Adrenal gland (tissue), 19 donors: ENCODE measurements at regions of chr10 and their contacts with region 1.

Region 1: GRCh38 chr10:71812016-71812912 is 38.8 kb downstream of the PSAP start:
- DNase-seq: peak; percentile 50 to 76 (median 71)
- H3K4me3 ChIP-seq: no peak overlapping the region
- H3K27ac ChIP-seq: no peak overlapping the region
- H3K4me1 ChIP-seq: peaks cover 1 to 11% of the 10 kb centered on the region in 2 donors
- H3K27me3 ChIP-seq: no peaks in the 10 kb centered on the region
- CTCF ChIP-seq: peak; percentile 64 to 90 (median 74)
- POLR2A ChIP-seq: no peak

Region 2: GRCh38 chr10:71314028-71314693 is 498.1 kb before region 1 on chr10:
- intact Hi-C with region 1: loop called in 1 of 2 experiments (anchors 5 kb)
- DNase-seq: peak in 5 of 7 donors; percentile 49 to 65 (median 53)
- H3K4me3 ChIP-seq: no peak overlapping the region
- H3K27ac ChIP-seq: peak overlapping the region in 1 of 5 donors; percentile 30
- H3K4me1 ChIP-seq: peaks cover 0 to 20% of the 10 kb centered on the region in 2 donors
- H3K27me3 ChIP-seq: no peaks in the 10 kb centered on the region
- CTCF ChIP-seq: peak; percentile 48 to 94 (median 68)
- POLR2A ChIP-seq: no peak

Region 3: DNA sequence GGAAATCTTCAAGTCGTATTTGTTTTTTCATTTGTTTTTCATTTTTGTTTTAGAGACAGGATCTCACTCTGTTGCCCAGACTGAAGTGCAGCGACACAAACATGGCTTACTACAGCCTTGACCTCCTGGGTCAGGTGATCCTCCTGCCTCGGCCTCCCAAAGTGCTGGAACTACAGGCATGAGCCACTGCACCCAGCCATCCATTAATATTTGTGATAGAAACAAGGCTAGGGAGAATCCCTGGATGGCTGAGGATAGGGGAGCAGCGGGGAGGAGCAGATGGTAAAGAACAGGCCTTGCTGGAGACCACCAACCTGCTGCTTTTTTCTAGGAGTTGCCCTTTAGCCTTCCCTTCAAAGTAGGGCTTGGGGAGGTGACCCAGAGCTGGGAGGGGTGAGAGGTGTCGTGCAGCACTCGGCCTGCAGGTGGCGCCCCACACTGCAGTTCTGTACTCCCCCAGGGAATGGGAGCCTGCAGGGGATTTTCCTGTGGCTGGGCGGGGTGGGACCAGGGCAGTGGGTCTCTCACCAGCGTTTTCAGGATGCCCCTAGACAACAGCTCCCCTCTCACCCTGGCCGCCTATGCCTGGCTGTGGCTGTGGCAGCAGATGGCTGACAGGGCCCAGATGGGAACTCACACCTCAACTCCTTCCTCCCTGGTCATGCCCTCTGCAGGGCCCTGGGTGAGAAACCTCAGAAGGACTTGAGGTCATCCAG is 428.1 kb before region 1 on chr10:
- intact Hi-C with region 1: loop called in 1 of 2 experiments (anchors 10 kb)
- DNase-seq: peak; percentile 49 to 84 (median 73)
- H3K4me3 ChIP-seq: no peak overlapping the region
- H3K27ac ChIP-seq: no peak overlapping the region
- H3K4me1 ChIP-seq: no peaks in the 10 kb centered on the region
- H3K27me3 ChIP-seq: no peaks in the 10 kb centered on the region
- CTCF ChIP-seq: peak; percentile 78 to 94 (median 90)
- POLR2A ChIP-seq: no peak

Region 4: DNA sequence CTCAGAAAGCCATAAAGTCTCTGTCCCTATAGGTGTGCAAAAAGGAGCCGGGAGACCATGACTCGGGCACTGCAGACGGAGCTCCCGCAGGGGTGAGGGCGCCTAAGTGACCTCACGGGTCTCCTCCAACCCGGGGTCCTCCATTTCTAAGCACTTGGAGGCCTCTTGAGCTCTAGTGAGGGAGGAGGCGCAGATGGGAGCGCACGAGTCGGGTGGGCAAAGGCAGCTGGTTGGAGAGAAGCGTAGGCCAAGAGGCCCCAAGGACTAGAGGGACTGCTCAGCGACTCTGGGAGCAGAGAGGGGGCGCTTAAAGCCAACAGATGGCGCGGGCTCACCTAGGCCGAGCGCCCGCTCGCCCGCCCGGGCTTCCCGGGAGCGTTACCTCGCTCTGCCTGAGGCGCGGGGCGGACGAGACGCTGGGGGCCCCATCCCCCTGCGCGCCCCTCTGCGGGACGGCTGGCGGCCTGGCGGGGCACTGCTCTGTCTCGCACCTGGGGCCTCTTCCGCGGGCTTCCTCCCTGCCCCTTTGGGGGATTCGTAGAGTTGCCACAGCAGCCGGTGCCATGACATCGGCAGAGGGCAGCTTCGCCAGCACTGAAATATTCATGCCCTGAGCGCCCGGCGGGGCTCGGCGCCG is 416.1 kb before region 1 on chr10:
- intact Hi-C with region 1: loop called in 1 of 2 experiments (anchors 10 kb)
- DNase-seq: peak in 4 of 7 donors; percentile 26 to 66 (median 38)
- H3K4me3 ChIP-seq: peak overlapping the region in 1 of 4 donors; percentile 65
- H3K27ac ChIP-seq: peak overlapping the region in 1 of 5 donors; percentile 45
- H3K4me1 ChIP-seq: peaks cover 9 to 13% of the 10 kb centered on the region in 2 donors
- H3K27me3 ChIP-seq: peaks cover 25% of the 10 kb centered on the region
- CTCF ChIP-seq: peak in 5 of 6 experiments; percentile 23 to 45 (median 37)
- POLR2A ChIP-seq: no peak

Region 5: GRCh38 chr10:71888623-71889387 is 76.5 kb after region 1 on chr10:
- intact Hi-C with region 1: loop called in 1 of 2 experiments (anchors 10 kb)
- DNase-seq: peak; percentile 85 to 92 (median 87)
- H3K4me3 ChIP-seq: peak overlapping the region; percentile 41 to 69 (median 56)
- H3K27ac ChIP-seq: peak overlapping the region; percentile 75 to 95 (median 86)
- H3K4me1 ChIP-seq: peaks cover 15 to 16% of the 10 kb centered on the region in 2 donors
- H3K27me3 ChIP-seq: no peaks in the 10 kb centered on the region
- CTCF ChIP-seq: no peak
- POLR2A ChIP-seq: peak; percentile 49 to 82

Region 6: GRCh38 chr10:71899665-71900412 is 87.6 kb after region 1 on chr10:
- intact Hi-C with region 1: no loop called
- DNase-seq: no peak
- H3K4me3 ChIP-seq: no peak overlapping the region
- H3K27ac ChIP-seq: no peak overlapping the region
- H3K4me1 ChIP-seq: no peaks in the 10 kb centered on the region
- H3K27me3 ChIP-seq: no peaks in the 10 kb centered on the region
- CTCF ChIP-seq: no peak
- POLR2A ChIP-seq: no peak